ENCODE measurements at regions of chr2 and their contacts with region 1.

Region 1: GRCh38 chr2:46062637-46063412 is 234.4 kb upstream of the EPAS1 start:
- DNase-seq: peak; percentile 33 to 87
- H3K4me3 ChIP-seq: no peak overlapping the region
- H3K27ac ChIP-seq: no peak overlapping the region
- H3K4me1 ChIP-seq: no peaks in the 10 kb centered on the region; a peak in 1 of 7 replicates
- H3K27me3 ChIP-seq: no peaks in the 10 kb centered on the region
- CTCF ChIP-seq: peak; percentile 52 to 90 (median 84)
- EP300 ChIP-seq: no peak
- POLR2A ChIP-seq: no peak
- RAD21 ChIP-seq: peak; percentile 78 to 86

Region 2: GRCh38 chr2:45567974-45568789 is 494.6 kb before region 1 on chr2:
- CTCF ChIA-PET with region 1: no interaction called
- POLR2A ChIA-PET with region 1: no interaction called
- DNase-seq: no peak
- H3K4me3 ChIP-seq: no peak overlapping the region
- H3K27ac ChIP-seq: no peak overlapping the region
- H3K4me1 ChIP-seq: peaks cover 0 to 6% (median 3%) of the 10 kb centered on the region in 4 experiments; a peak in 2 of 7 replicates
- H3K27me3 ChIP-seq: no peaks in the 10 kb centered on the region
- CTCF ChIP-seq: no peak
- EP300 ChIP-seq: no peak
- POLR2A ChIP-seq: no peak
- RAD21 ChIP-seq: no peak

Region 3: GRCh38 chr2:45993476-45993991 is 69.3 kb before region 1 on chr2:
- CTCF ChIA-PET with region 1: interaction called, 15 read pairs
- POLR2A ChIA-PET with region 1: no interaction called
- DNase-seq: peak; percentile 43 to 73
- H3K4me3 ChIP-seq: no peak overlapping the region
- H3K27ac ChIP-seq: no peak overlapping the region
- H3K4me1 ChIP-seq: no peaks in the 10 kb centered on the region; a peak in 1 of 7 replicates
- H3K27me3 ChIP-seq: no peaks in the 10 kb centered on the region
- CTCF ChIP-seq: peak; percentile 45 to 84 (median 78)
- EP300 ChIP-seq: no peak
- POLR2A ChIP-seq: no peak
- RAD21 ChIP-seq: peak; percentile 90 to 91

Region 4: DNA sequence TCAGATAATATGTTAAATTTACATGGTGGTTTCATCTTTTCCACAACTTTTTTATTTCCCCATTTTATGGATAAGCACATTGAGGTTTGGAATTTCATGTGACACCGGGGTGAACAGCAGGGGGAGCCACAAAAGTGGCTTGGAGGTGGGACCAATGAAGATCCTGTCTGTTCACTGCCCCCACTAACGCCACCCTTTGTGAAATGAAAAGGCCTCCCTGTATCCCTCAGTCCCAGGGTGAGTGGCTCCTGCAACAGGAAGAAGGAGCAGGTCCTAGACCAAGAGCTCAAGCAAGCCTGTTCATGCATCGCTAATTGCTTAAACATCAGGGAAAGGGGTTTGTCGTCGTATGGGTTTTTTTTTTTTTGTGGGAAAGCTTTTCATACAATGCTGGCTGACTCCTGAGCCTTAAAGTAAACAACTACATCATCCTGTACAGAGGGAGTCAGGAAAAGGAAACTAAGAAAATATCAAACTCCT is 33.5 kb before region 1 on chr2:
- CTCF ChIA-PET with region 1: interaction called, 13 read pairs
- POLR2A ChIA-PET with region 1: no interaction called
- DNase-seq: no peak
- H3K4me3 ChIP-seq: no peak overlapping the region
- H3K27ac ChIP-seq: no peak overlapping the region
- H3K4me1 ChIP-seq: no peaks in the 10 kb centered on the region; a peak in 1 of 7 replicates
- H3K27me3 ChIP-seq: no peaks in the 10 kb centered on the region
- CTCF ChIP-seq: peak in 2 of 3 experiments; percentile 5 to 21; a peak in 2 of 4 replicates
- EP300 ChIP-seq: no peak
- POLR2A ChIP-seq: no peak
- RAD21 ChIP-seq: no peak

Region 5: DNA sequence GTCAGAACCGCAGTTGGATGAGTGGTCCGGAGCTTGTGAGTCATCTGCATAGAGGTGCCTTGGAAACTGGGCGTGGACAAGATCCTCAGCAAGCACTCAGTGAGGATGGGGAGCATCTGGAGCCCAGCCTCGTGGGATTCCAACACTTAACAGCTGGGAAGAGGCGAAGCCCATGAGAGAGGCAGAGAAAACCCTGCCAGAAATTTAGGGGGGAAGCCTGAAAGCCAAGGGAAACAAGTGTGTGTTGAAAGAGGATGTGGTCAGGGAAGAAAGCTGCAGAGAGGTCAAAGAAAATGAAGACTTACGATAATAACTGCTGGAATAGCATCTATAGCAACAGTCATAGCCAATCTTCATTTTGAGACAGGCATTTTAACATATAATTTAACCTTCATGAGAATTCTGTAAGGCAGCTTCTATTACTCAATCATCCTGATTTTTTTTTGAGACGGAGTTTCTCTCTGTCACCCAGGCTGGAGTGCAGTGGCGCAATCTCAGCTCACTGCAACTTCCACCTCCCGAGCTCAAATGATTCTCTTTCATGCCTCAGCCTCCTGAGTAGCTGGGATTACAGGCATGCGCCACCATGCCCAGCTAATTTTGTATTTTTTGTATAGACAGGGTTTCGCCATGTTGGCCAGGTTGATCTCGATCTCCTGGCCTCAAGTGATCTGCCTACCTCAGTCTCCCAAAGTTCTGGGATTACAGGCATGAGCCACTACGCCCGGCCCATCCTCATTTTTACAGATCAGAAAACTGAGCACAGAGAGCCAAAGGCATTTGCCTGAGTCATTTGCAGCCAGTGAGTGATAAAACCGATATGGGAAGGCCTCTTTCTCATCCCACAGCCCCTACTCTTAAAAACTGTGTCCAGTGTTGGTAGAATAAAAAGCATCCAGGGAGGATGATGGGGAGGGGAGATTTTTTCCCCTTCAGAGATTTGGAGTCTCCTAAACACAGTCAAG is 20.0 kb after region 1 on chr2:
- CTCF ChIA-PET with region 1: interaction called, 15 read pairs
- POLR2A ChIA-PET with region 1: no interaction called
- DNase-seq: no peak
- H3K4me3 ChIP-seq: no peak overlapping the region
- H3K27ac ChIP-seq: no peak overlapping the region
- H3K4me1 ChIP-seq: no peaks in the 10 kb centered on the region
- H3K27me3 ChIP-seq: no peaks in the 10 kb centered on the region
- CTCF ChIP-seq: no peak
- EP300 ChIP-seq: no peak
- POLR2A ChIP-seq: no peak
- RAD21 ChIP-seq: no peak

Region 6: DNA sequence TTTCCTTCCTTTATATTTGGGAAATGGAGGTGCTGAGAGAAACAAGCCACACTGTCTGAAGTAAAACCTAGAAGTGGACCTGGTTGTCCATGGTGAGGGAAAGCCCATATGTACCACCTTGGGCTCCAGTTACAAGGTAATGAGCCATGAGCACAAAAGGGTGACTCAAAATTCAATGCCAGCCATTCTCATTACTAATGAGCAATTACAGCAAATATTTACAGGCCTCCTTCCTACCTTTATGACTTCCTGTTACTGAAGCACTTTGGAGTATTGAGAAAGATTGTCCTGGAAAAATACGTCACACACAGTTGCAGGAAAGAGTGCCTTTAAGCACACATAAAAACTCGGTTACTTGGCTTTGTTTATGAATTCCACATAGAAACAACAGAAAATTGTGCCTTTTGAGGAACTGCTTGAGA is 243.5 kb after region 1 on chr2:
- CTCF ChIA-PET with region 1: interaction called, 10 read pairs
- POLR2A ChIA-PET with region 1: no interaction called
- DNase-seq: no peak
- H3K4me3 ChIP-seq: no peak overlapping the region
- H3K27ac ChIP-seq: no peak overlapping the region
- H3K4me1 ChIP-seq: peaks cover 0 to 8% (median under 1%) of the 10 kb centered on the region in 4 experiments; a peak in 3 of 7 replicates
- H3K27me3 ChIP-seq: peaks cover 0 to 6% (median 2%) of the 10 kb centered on the region in 4 experiments; a peak in 4 of 7 replicates
- CTCF ChIP-seq: no peak
- EP300 ChIP-seq: no peak
- POLR2A ChIP-seq: no peak
- RAD21 ChIP-seq: no peak

Measured in H1 (cell line).